Activated CD4-positive, alpha-beta T cell treated with anti-CD3 and anti-CD28 coated beads for 36 hours (primary cell): ENCODE measurements at regions of chr14 and their contacts with region 1.

Region 1: DNA sequence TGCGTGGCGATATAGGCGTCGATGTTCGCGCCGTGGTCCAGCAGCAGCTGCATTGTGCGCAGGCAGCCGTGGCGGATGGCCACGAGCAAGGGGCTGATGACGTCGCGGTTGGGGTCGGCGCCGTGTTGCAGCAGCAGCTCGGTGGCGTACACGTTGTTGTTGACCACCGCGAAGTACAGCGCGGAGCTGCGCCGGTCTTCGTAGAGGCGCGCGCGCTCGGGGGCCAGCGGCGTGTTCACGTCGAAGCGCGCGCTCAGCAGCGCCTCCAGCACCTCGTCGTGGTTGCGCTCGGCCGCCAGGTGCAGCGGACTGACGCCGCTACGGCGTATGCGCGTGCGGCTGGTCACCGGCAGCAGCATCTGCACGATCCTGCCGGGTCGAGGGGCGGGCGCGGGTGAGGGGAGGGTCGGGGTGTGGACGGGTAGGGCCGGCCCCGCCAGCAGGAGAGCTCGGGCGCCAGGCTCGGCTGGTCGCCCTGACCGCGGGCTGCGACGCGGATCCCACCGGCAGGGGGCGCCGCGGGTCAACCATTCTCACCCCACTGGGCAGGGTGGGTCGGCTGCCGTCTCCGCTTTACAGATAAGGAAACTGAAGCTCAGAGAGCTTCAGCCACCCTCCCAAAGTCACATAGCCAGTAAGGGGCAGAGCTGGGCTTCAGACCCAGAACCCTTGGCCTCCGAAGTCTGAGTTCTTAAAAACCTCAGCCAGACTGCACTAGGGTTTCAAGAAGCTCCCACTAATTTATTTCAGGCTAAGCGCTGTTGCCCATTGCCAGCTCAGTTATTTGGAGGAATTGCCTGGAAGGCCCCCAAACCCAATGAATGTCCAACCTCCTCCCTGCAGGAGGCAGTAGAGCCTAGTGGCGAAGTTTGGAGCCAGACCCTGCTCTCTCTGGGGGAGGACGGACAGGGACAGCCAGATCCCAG is 12.4 kb downstream of the FAM181A start:
- DNase-seq: peak; percentile 94
- ATAC-seq: peak; percentile 95
- H3K4me3 Mint-ChIP-seq: peak overlapping the region; percentile 43
- H3K27ac Mint-ChIP-seq: peak overlapping the region; percentile 38
- H3K4me1 Mint-ChIP-seq: peaks cover 14% of the 10 kb centered on the region
- H3K27me3 Mint-ChIP-seq: peaks cover 14% of the 10 kb centered on the region

Region 2: DNA sequence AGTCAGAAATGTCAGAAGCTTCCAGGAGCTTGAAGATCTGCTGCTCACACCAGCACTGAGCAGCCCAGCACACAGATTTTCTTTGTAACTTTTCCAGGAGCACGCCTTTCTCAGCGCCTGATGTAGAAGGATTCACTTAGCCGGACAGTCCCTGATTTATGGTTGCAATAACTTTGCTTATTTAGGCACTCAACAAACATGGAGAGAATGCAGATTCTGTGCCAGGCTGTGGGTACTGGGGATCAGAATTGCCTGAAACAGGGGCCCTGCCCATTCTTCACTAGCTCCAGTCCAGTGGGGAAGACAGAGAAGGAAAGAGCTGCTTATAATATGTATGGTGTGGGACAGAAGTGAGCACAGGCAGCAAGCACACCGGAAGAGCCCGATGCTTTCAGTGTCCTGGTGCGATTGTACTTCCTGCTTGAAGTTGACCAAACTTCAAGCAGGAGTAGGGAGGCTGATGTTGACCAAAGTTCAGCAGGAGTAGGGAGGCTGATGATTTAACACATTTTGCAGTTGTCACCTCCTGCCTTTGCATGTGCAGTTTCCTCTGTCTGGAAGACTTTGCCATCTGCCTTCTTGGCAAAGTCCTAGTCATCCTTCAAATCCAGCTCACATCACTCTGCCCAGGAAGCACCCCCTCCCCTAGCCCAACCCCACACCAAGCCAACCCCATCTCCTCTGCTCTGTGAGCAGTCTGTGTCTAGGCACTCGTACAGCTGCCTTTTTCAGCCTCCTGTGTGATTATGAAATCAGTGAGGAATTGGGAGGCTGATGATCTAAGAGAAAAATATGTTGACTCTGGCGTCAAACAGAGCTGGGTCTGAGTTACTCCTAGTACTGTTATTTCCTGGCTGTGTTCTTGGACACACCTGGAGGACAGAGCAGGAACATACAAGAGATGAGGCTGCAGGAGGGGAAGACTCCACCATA is 139.3 kb before region 1 on chr14:
- CTCF ChIA-PET with region 1: no interaction called
- POLR2A ChIA-PET with region 1: no interaction called
- intact Hi-C with region 1: no loop called
- DNase-seq: no peak
- ATAC-seq: no peak
- H3K4me3 Mint-ChIP-seq: no peak overlapping the region
- H3K27ac Mint-ChIP-seq: no peak overlapping the region
- H3K4me1 Mint-ChIP-seq: no peaks in the 10 kb centered on the region
- H3K27me3 Mint-ChIP-seq: peaks cover 14% of the 10 kb centered on the region

Region 3: DNA sequence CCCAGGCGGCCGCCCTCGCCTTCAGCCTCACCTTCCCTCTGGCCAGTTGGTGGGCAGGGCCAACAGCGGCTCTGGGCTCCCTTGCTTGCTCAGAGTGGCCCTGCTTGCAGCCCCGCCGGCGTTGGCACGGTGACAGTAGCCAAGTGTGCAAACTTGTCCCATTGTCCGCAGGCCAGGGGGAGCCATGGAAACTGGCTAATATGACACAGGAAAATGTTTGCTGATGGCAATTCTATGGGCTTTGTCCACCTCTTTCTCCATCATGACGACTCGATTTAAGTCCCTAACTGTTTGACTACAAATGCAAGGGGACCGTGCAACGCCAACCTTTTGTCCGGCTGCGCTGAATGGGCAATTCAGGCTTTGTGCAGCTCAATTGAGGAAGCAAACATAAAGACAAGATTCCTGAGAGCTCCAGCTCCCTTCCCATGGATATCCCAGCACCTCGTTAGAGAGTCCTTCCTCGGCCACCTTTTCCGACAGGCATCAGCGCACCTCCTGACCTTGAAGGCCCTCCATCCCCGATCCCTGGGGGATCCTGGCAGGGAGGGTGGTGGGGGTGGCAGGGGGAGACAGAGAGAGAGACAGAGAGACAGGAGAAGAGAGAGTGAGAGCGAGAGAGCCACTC is 13.2 kb before region 1 on chr14:
- CTCF ChIA-PET with region 1: interaction called, 11 read pairs
- POLR2A ChIA-PET with region 1: no interaction called
- intact Hi-C with region 1: no loop called
- DNase-seq: no peak
- ATAC-seq: no peak
- H3K4me3 Mint-ChIP-seq: no peak overlapping the region
- H3K27ac Mint-ChIP-seq: no peak overlapping the region
- H3K4me1 Mint-ChIP-seq: no peaks in the 10 kb centered on the region
- H3K27me3 Mint-ChIP-seq: no peaks in the 10 kb centered on the region

Region 4: GRCh38 chr14:93959239-93960107 is 19.9 kb after region 1 on chr14:
- CTCF ChIA-PET with region 1: interaction called, 46 read pairs
- POLR2A ChIA-PET with region 1: interaction called, 8 read pairs
- intact Hi-C with region 1: loop called in 1 of 2 experiments (anchors 1 kb)
- DNase-seq: peak; percentile 97
- ATAC-seq: peak; percentile 74
- H3K4me3 Mint-ChIP-seq: peak overlapping the region; percentile 70
- H3K27ac Mint-ChIP-seq: peak overlapping the region; percentile 100
- H3K4me1 Mint-ChIP-seq: peaks cover 96% of the 10 kb centered on the region
- H3K27me3 Mint-ChIP-seq: no peaks in the 10 kb centered on the region

Region 5: GRCh38 chr14:93984987-93985410 is 45.4 kb after region 1 on chr14:
- CTCF ChIA-PET with region 1: interaction called, 180 read pairs
- POLR2A ChIA-PET with region 1: no interaction called
- intact Hi-C with region 1: no loop called
- DNase-seq: no peak
- ATAC-seq: no peak
- H3K4me3 Mint-ChIP-seq: no peak overlapping the region
- H3K27ac Mint-ChIP-seq: no peak overlapping the region
- H3K4me1 Mint-ChIP-seq: peaks cover 13% of the 10 kb centered on the region
- H3K27me3 Mint-ChIP-seq: no peaks in the 10 kb centered on the region

Region 6: GRCh38 chr14:94001501-94002396 is 62.2 kb after region 1 on chr14:
- CTCF ChIA-PET with region 1: interaction called, 349 read pairs
- POLR2A ChIA-PET with region 1: interaction called, 12 read pairs
- intact Hi-C with region 1: loop called (anchors 1 kb)
- DNase-seq: peak; percentile 78
- ATAC-seq: peak; percentile 84
- H3K4me3 Mint-ChIP-seq: no peak overlapping the region
- H3K27ac Mint-ChIP-seq: peak overlapping the region; percentile 77
- H3K4me1 Mint-ChIP-seq: peaks cover 24% of the 10 kb centered on the region
- H3K27me3 Mint-ChIP-seq: peaks cover 5% of the 10 kb centered on the region

Region 7: DNA sequence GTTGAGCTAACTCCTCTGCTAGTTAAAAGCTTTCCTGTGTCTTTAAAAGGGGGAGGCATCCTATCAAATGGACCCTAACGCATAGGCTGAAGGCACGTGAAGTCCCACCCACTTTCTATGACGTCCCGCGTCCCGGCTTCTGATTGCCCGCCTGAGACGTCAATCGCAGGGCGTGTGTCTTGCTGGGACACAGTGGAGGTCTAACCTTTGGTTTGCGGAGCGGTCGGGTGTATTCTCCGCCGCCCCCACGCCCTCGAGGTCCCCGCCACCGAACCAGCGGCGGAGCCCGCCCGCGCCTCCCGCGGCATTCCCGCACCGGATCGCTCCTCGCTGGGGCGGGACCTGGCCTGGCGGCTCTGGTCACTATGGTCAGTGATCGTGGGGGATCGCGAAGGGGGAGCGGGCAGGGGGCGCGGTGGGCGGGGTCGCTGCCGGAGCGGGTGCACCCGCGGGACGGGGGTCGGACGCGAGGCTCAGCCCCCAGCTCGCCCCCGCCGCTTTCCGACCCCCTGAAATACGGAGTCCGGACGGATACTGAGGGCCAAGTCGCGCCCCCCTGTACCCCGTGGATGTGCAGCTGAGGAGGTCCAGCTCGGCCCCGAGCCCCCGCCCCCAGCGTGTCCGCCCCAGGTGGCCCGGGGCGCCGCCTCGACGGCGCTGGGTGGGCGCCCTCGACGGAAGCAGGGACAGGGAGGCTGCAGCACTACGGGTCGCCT is 86.8 kb after region 1 on chr14 and contains the start of gene OTUB2:
- CTCF ChIA-PET with region 1: interaction called, 12 read pairs
- POLR2A ChIA-PET with region 1: no interaction called
- intact Hi-C with region 1: no loop called
- DNase-seq: peak; percentile 98
- ATAC-seq: peak; percentile 99
- H3K4me3 Mint-ChIP-seq: peak within 1 kb of the TSS; percentile 54
- H3K27ac Mint-ChIP-seq: no peak within 1 kb of the TSS
- H3K4me1 Mint-ChIP-seq: peaks cover 32% of the 10 kb centered on the region
- H3K27me3 Mint-ChIP-seq: no peaks in the 10 kb centered on the region
- total RNA-seq, gene OTUB2: 0.75 to 0.93 TPM

Region 8: GRCh38 chr14:94115058-94115591 is 175.6 kb after region 1 on chr14:
- CTCF ChIA-PET with region 1: no interaction called
- POLR2A ChIA-PET with region 1: no interaction called
- intact Hi-C with region 1: no loop called
- DNase-seq: no peak
- ATAC-seq: no peak
- H3K4me3 Mint-ChIP-seq: no peak overlapping the region
- H3K27ac Mint-ChIP-seq: no peak overlapping the region
- H3K4me1 Mint-ChIP-seq: no peaks in the 10 kb centered on the region
- H3K27me3 Mint-ChIP-seq: peaks cover 8% of the 10 kb centered on the region

Region 9: GRCh38 chr14:94136575-94137331 is 197.2 kb after region 1 on chr14:
- CTCF ChIA-PET with region 1: interaction called, 11 read pairs
- POLR2A ChIA-PET with region 1: no interaction called
- intact Hi-C with region 1: loop called in 1 of 2 experiments (anchors 2 kb)
- DNase-seq: peak; percentile 93
- ATAC-seq: peak; percentile 90
- H3K4me3 Mint-ChIP-seq: no peak overlapping the region
- H3K27ac Mint-ChIP-seq: no peak overlapping the region
- H3K4me1 Mint-ChIP-seq: peaks cover 5% of the 10 kb centered on the region
- H3K27me3 Mint-ChIP-seq: peaks cover 6% of the 10 kb centered on the region

Region 10: GRCh38 chr14:94458558-94459205 is 519.1 kb after region 1 on chr14:
- CTCF ChIA-PET with region 1: no interaction called
- POLR2A ChIA-PET with region 1: no interaction called
- intact Hi-C with region 1: no loop called
- DNase-seq: no peak
- ATAC-seq: no peak
- H3K4me3 Mint-ChIP-seq: no peak overlapping the region
- H3K27ac Mint-ChIP-seq: no peak overlapping the region
- H3K4me1 Mint-ChIP-seq: peaks cover 10% of the 10 kb centered on the region
- H3K27me3 Mint-ChIP-seq: peaks cover 20% of the 10 kb centered on the region